ENCODE measurements at regions of chr6 and their contacts with region 1.

Region 1: GRCh38 chr6:126227833-126228702 is 111.8 kb upstream of the CENPW start:
- DNase-seq: no peak
- ATAC-seq: no peak
- H3K4me3 ChIP-seq: no peak overlapping the region
- H3K4me3 Mint-ChIP-seq: no peak overlapping the region
- H3K27ac ChIP-seq: no peak overlapping the region
- H3K27ac Mint-ChIP-seq: no peak overlapping the region
- H3K4me1 ChIP-seq: no peaks in the 10 kb centered on the region
- H3K4me1 Mint-ChIP-seq: no peaks in the 10 kb centered on the region
- H3K27me3 ChIP-seq: no peaks in the 10 kb centered on the region
- H3K27me3 Mint-ChIP-seq: no peaks in the 10 kb centered on the region

Region 2: DNA sequence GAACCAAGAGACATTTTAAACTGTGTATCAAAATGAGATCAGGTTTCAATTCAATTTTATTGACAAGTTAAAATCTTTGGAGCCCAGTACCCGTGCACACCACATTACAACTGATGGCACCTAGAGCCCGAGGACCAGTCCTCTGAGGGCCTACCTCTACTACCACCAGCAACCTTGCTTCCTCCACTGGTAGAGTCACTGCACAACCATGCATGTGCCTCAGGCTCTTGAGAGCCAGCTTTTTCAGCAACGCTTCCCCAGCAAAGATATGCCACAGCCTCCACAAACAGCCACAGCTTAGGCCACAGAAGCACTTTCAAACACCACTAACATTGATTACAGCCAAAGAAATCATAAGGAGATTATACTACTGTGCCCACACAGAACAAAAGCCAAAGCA is 1594.4 kb before region 1 on chr6:
- CTCF ChIA-PET with region 1: no interaction called
- POLR2A ChIA-PET with region 1: no interaction called
- DNase-seq: no peak
- ATAC-seq: no peak
- H3K4me3 ChIP-seq: no peak overlapping the region
- H3K4me3 Mint-ChIP-seq: no peak overlapping the region
- H3K27ac ChIP-seq: no peak overlapping the region
- H3K27ac Mint-ChIP-seq: no peak overlapping the region
- H3K4me1 ChIP-seq: no peaks in the 10 kb centered on the region
- H3K4me1 Mint-ChIP-seq: no peaks in the 10 kb centered on the region
- H3K27me3 ChIP-seq: no peaks in the 10 kb centered on the region
- H3K27me3 Mint-ChIP-seq: no peaks in the 10 kb centered on the region

Region 3: GRCh38 chr6:126188271-126188909 is 39.7 kb before region 1 on chr6:
- CTCF ChIA-PET with region 1: no interaction called
- POLR2A ChIA-PET with region 1: interaction called in 1 of 2 experiments, 11 read pairs
- DNase-seq: no peak
- ATAC-seq: no peak
- H3K4me3 ChIP-seq: no peak overlapping the region
- H3K4me3 Mint-ChIP-seq: no peak overlapping the region
- H3K27ac ChIP-seq: no peak overlapping the region
- H3K27ac Mint-ChIP-seq: no peak overlapping the region
- H3K4me1 ChIP-seq: no peaks in the 10 kb centered on the region
- H3K4me1 Mint-ChIP-seq: no peaks in the 10 kb centered on the region
- H3K27me3 ChIP-seq: no peaks in the 10 kb centered on the region
- H3K27me3 Mint-ChIP-seq: no peaks in the 10 kb centered on the region

Measured in T-cell (primary cell).